PC-9 (cell line): ENCODE measurements at regions of chr10 and their contacts with region 1.

Region 1: GRCh38 chr10:77350711-77351119 is 286.9 kb downstream of the KCNMA1 start:
- DNase-seq: peak; percentile 86 to 93
- H3K4me3 ChIP-seq: no peak overlapping the region
- H3K27ac ChIP-seq: peak overlapping the region; percentile 22; the same call in 1 of the 2 replicates
- H3K4me1 ChIP-seq: peaks cover 26% of the 10 kb centered on the region
- H3K27me3 ChIP-seq: no peaks in the 10 kb centered on the region
- CTCF ChIP-seq: no peak

Region 2: GRCh38 chr10:77338143-77338542 is 12.6 kb before region 1 on chr10:
- CTCF ChIA-PET with region 1: no interaction called
- POLR2A ChIA-PET with region 1: no interaction called
- intact Hi-C with region 1: no loop called
- DNase-seq: no peak
- H3K4me3 ChIP-seq: no peak overlapping the region
- H3K27ac ChIP-seq: no peak overlapping the region
- H3K4me1 ChIP-seq: no peaks in the 10 kb centered on the region
- H3K27me3 ChIP-seq: no peaks in the 10 kb centered on the region; the same call in 1 of the 2 replicates
- CTCF ChIP-seq: no peak

Region 3: GRCh38 chr10:77416311-77417135 is 65.8 kb after region 1 on chr10:
- CTCF ChIA-PET with region 1: no interaction called
- POLR2A ChIA-PET with region 1: no interaction called
- intact Hi-C with region 1: loop called (anchors 2 kb)
- DNase-seq: peak; percentile 73 to 96
- H3K4me3 ChIP-seq: peak overlapping the region; percentile 14; the same call in 1 of the 2 replicates
- H3K27ac ChIP-seq: peak overlapping the region; percentile 82
- H3K4me1 ChIP-seq: peaks cover 36% of the 10 kb centered on the region
- H3K27me3 ChIP-seq: no peaks in the 10 kb centered on the region
- CTCF ChIP-seq: no peak